ENCODE measurements at regions of chr6 and their contacts with region 1.

Region 1: DNA sequence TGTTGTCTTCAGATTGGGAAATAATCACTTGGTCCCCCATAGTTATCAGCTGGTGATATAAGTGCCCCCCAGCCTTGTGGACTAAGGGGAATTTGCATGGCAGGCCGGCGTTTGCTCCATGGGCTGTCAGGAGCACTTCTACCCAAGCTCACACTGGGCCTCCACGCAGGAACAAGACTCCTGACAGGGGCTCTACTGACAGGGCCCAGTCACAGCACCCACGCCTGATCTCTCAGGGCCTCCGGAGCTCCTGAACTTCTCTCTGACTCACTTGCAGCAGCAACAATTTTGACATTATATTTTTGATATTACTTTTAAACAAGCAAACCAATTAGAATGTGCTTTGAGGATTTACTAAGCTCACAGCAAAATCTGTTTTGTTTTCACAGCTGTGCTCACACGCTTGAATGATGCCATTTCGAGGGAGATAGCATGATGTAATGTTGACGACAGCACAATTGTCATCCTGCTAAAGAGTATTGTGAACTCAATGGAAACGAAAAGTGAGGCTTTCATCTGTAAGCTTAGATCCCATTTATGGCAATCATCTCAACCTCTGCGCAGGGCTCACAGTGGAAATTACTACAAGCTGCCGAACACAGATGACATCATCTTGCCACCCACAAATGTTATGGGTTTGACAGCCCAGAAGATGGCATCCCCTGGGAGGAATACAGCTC is 28.7 kb upstream of the TXNDC5 start:
- DNase-seq: no peak
- H3K4me3 ChIP-seq: no peak overlapping the region
- H3K27ac ChIP-seq: no peak overlapping the region
- H3K4me1 ChIP-seq: no peaks in the 10 kb centered on the region
- H3K27me3 ChIP-seq: no peaks in the 10 kb centered on the region
- CTCF ChIP-seq: no peak
- EP300 ChIP-seq: no peak
- POLR2A ChIP-seq: no peak
- RAD21 ChIP-seq: no peak

Region 2: DNA sequence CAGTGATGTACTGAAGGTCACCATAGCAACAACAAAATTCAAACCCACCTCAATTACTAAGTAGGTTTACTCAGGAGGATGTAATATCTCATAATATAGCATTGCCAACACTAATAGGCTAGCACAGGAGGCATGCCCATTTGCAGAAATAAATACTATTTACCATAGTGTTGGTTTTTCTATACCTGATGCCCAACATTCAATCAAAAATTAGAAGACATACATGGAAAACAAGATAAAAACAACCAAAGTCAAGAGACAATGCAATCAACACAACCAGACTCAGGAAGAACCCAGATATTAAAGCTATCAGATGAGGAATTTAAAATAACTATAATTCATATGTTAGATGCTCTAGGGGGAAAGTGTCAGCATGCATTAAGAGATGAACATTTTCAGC is 14.5 kb before region 1 on chr6:
- CTCF ChIA-PET with region 1: interaction called, 12 read pairs
- POLR2A ChIA-PET with region 1: no interaction called
- DNase-seq: no peak
- H3K4me3 ChIP-seq: no peak overlapping the region
- H3K27ac ChIP-seq: no peak overlapping the region
- H3K4me1 ChIP-seq: no peaks in the 10 kb centered on the region
- H3K27me3 ChIP-seq: no peaks in the 10 kb centered on the region
- CTCF ChIP-seq: no peak
- EP300 ChIP-seq: no peak
- POLR2A ChIP-seq: no peak
- RAD21 ChIP-seq: no peak

Region 3: GRCh38 chr6:7954477-7955200 is 15.3 kb after region 1 on chr6:
- CTCF ChIA-PET with region 1: interaction called, 16 read pairs
- POLR2A ChIA-PET with region 1: no interaction called
- DNase-seq: no peak
- H3K4me3 ChIP-seq: no peak overlapping the region
- H3K27ac ChIP-seq: no peak overlapping the region
- H3K4me1 ChIP-seq: no peaks in the 10 kb centered on the region
- H3K27me3 ChIP-seq: no peaks in the 10 kb centered on the region
- CTCF ChIP-seq: no peak
- EP300 ChIP-seq: no peak
- POLR2A ChIP-seq: no peak
- RAD21 ChIP-seq: no peak

Region 4: DNA sequence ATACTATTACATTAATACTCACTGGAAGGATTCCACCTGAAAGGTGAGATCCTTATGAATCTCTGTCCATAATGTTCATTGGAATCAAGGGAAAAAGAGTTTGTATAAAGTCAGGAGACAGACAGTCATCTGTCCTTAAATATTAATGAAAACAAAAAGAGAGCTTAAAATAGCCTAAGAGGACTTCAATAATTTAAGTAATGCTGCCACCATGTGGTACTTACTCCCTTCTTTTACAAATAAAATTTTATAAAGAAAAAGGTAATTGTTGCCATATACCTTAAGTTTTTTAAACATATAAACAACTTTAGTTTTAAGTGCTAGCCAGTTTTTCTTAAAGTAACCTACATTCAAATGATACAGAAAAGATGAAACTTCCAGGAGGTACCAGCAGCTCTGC is 119.8 kb after region 1 on chr6:
- CTCF ChIA-PET with region 1: no interaction called
- POLR2A ChIA-PET with region 1: no interaction called
- DNase-seq: no peak
- H3K4me3 ChIP-seq: no peak overlapping the region
- H3K27ac ChIP-seq: no peak overlapping the region
- H3K4me1 ChIP-seq: no peaks in the 10 kb centered on the region
- H3K27me3 ChIP-seq: no peaks in the 10 kb centered on the region
- CTCF ChIP-seq: no peak; a peak in 1 of 4 replicates
- EP300 ChIP-seq: no peak
- POLR2A ChIP-seq: no peak
- RAD21 ChIP-seq: peak in 1 of 2 experiments; percentile 35; a peak in 3 of 4 replicates

Measured in H1 (cell line).